Tibial artery (tissue), 4 donors: ENCODE measurements at regions of chr3 and their contacts with region 1.

Region 1: GRCh38 chr3:120558771-120559241 is 37.3 kb upstream of the NDUFB4 start:
- DNase-seq: peak; percentile 91 to 92
- H3K4me3 ChIP-seq: peak overlapping the region; percentile 50 to 57
- H3K27ac ChIP-seq: peak overlapping the region; percentile 73 to 85
- H3K4me1 ChIP-seq: peaks cover 0 to 54% (median 33%) of the 10 kb centered on the region in 4 donors
- H3K27me3 ChIP-seq: no peaks in the 10 kb centered on the region
- CTCF ChIP-seq: peak; percentile 93 to 97

Region 2: GRCh38 chr3:120239644-120240043 is 319.2 kb before region 1 on chr3:
- intact Hi-C with region 1: loop called (anchors 5 kb)
- DNase-seq: no peak
- H3K4me3 ChIP-seq: no peak overlapping the region
- H3K27ac ChIP-seq: no peak overlapping the region
- H3K4me1 ChIP-seq: no peaks in the 10 kb centered on the region
- H3K27me3 ChIP-seq: no peaks in the 10 kb centered on the region
- CTCF ChIP-seq: no peak